A673 (cell line): ENCODE measurements at regions of chr11 and their contacts with region 1.

Region 1: GRCh38 chr11:32527261-32528175 is 56.1 kb upstream of the EIF3M start:
- DNase-seq: no peak
- H3K4me3 ChIP-seq: no peak overlapping the region
- H3K27ac ChIP-seq: no peak overlapping the region
- H3K4me1 ChIP-seq: no peaks in the 10 kb centered on the region
- H3K27me3 ChIP-seq: no peaks in the 10 kb centered on the region
- CTCF ChIP-seq: no peak

Region 2: GRCh38 chr11:31412946-31413345 is 1114.6 kb before region 1 on chr11:
- CTCF ChIA-PET with region 1: no interaction called
- POLR2A ChIA-PET with region 1: no interaction called
- intact Hi-C with region 1: no loop called
- DNase-seq: peak; percentile 39
- H3K4me3 ChIP-seq: no peak overlapping the region
- H3K27ac ChIP-seq: no peak overlapping the region
- H3K4me1 ChIP-seq: peaks cover 5% of the 10 kb centered on the region
- H3K27me3 ChIP-seq: no peaks in the 10 kb centered on the region
- CTCF ChIP-seq: no peak

Region 3: GRCh38 chr11:32266601-32267000 is 260.9 kb before region 1 on chr11:
- CTCF ChIA-PET with region 1: interaction called, 12 read pairs
- POLR2A ChIA-PET with region 1: no interaction called
- intact Hi-C with region 1: no loop called
- DNase-seq: peak; percentile 44
- H3K4me3 ChIP-seq: no peak overlapping the region
- H3K27ac ChIP-seq: no peak overlapping the region
- H3K4me1 ChIP-seq: peaks cover 2% of the 10 kb centered on the region
- H3K27me3 ChIP-seq: no peaks in the 10 kb centered on the region
- CTCF ChIP-seq: no peak